ENCODE measurements at regions of chr4 and their contacts with region 1.

Region 1: GRCh38 chr4:37389967-37390580 is 145.5 kb downstream of the NWD2 start:
- DNase-seq: peak; percentile 65
- H3K4me3 ChIP-seq: no peak overlapping the region
- H3K27ac ChIP-seq: no peak overlapping the region
- H3K4me1 ChIP-seq: no peaks in the 10 kb centered on the region
- H3K27me3 ChIP-seq: no peaks in the 10 kb centered on the region
- CTCF ChIP-seq: peak; percentile 63

Region 2: GRCh38 chr4:36351082-36351666 is 1038.9 kb before region 1 on chr4:
- intact Hi-C with region 1: loop called (anchors 5 kb)
- DNase-seq: peak; percentile 65
- H3K4me3 ChIP-seq: no peak overlapping the region
- H3K27ac ChIP-seq: no peak overlapping the region
- H3K4me1 ChIP-seq: no peaks in the 10 kb centered on the region
- H3K27me3 ChIP-seq: no peaks in the 10 kb centered on the region
- CTCF ChIP-seq: peak; percentile 75

Region 3: DNA sequence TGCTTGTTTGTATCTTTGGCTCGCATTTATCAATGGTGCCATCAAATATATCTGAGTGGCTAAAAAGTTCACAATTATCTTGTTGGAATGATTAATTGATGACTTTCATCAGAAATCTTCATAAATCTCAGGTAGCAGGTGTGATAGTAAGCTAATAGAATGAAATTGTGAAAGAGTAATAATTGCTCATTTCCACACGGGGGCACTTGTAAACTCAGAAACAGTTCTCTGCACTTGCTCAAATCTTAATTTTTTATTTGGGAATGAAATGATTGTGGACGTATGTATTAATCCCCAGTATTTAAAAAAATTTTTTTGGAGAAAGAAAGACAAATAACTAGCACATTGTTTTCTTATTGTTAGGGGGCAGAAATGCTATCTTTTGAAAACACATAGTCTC is 975.8 kb before region 1 on chr4:
- intact Hi-C with region 1: loop called (anchors 10 kb)
- DNase-seq: no peak
- H3K4me3 ChIP-seq: no peak overlapping the region
- H3K27ac ChIP-seq: no peak overlapping the region
- H3K4me1 ChIP-seq: no peaks in the 10 kb centered on the region
- H3K27me3 ChIP-seq: no peaks in the 10 kb centered on the region
- CTCF ChIP-seq: no peak

Region 4: GRCh38 chr4:37188100-37188499 is 202.0 kb before region 1 on chr4:
- intact Hi-C with region 1: loop called (anchors 10 kb)
- DNase-seq: peak; percentile 18
- H3K4me3 ChIP-seq: no peak overlapping the region
- H3K27ac ChIP-seq: no peak overlapping the region
- H3K4me1 ChIP-seq: no peaks in the 10 kb centered on the region
- H3K27me3 ChIP-seq: no peaks in the 10 kb centered on the region
- CTCF ChIP-seq: peak; percentile 14

Region 5: GRCh38 chr4:37561803-37562207 is 171.7 kb after region 1 on chr4:
- intact Hi-C with region 1: no loop called
- DNase-seq: no peak
- H3K4me3 ChIP-seq: no peak overlapping the region
- H3K27ac ChIP-seq: no peak overlapping the region
- H3K4me1 ChIP-seq: no peaks in the 10 kb centered on the region
- H3K27me3 ChIP-seq: no peaks in the 10 kb centered on the region
- CTCF ChIP-seq: no peak

Region 6: GRCh38 chr4:37584071-37584470 is 194.0 kb after region 1 on chr4:
- intact Hi-C with region 1: no loop called
- DNase-seq: peak; percentile 86
- H3K4me3 ChIP-seq: peak overlapping the region; percentile 35
- H3K27ac ChIP-seq: peak overlapping the region; percentile 87
- H3K4me1 ChIP-seq: no peaks in the 10 kb centered on the region
- H3K27me3 ChIP-seq: no peaks in the 10 kb centered on the region
- CTCF ChIP-seq: no peak